ENCODE measurements at regions of chr2 and their contacts with region 1.

Region 1: GRCh38 chr2:102703748-102704147 is 58.1 kb upstream of the TMEM182 start:
- ATAC-seq: peak in 4 of 8 experiments; percentile 58 to 95 (median 88)
- H3K4me3 ChIP-seq: no peak overlapping the region
- H3K27ac ChIP-seq: no peak overlapping the region
- H3K4me1 ChIP-seq: no peaks in the 10 kb centered on the region

Region 2: DNA sequence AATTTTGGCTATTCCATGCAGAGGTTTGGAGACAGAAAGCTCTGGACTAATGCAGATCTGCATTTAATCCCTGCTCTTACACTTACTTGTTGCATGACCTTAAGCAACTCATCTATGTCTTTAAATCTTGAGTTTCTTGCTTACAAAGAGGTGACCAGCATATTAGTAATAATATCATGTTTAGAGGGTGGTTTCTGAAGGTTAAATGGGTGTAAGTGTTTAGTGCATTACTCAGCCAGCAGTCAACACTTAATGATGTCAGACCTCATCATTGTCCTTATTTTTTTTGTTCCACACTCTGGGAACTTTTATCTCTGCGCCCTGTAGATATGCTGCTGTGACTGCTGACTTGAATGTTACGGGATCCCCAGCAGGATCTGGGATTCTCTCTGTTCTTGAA is 390.7 kb before region 1 on chr2:
- in situ Hi-C with region 1: no loop called
- ATAC-seq: peak in 2 of 8 experiments; percentile 16 to 55
- H3K4me3 ChIP-seq: no peak overlapping the region
- H3K27ac ChIP-seq: no peak overlapping the region
- H3K4me1 ChIP-seq: no peaks in the 10 kb centered on the region

Region 3: DNA sequence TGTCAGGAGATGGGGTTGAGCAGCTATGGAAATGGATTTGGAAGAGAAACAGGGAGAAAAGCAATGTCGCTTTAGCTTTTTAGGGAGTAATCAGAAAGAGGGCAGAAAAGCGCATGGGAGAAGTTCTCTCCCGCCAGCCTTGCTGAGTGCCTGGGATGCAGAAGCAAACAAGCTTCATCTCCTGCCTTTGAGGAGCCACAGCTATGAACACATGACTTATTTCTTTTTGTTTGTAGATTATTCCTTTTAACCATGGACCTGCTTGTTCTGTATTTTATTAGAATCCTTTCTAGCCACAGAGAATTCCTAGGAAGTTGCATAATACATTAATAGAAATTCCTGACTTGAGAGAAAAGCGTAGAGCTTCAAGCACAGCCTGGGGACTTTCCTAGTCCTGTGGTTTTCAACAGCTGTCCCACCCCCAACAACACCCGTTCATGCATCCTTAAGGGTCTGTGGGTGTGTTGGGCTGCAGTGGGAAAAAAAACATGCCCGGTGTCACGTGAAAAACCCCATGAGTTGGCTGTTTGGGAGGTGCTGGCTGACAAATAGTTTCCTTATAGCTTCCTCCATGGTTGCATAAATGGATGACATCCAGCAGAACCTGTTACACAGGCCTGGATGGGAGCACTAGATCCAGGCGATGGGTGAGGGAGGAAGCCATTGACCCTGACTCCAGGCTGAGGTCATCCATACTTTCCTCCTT is 215.8 kb before region 1 on chr2:
- in situ Hi-C with region 1: loop called in 1 of 9 experiments (anchors 25 kb)
- ATAC-seq: peak in 3 of 8 experiments; percentile 73 to 89 (median 85)
- H3K4me3 ChIP-seq: no peak overlapping the region
- H3K27ac ChIP-seq: no peak overlapping the region
- H3K4me1 ChIP-seq: no peaks in the 10 kb centered on the region

Region 4: GRCh38 chr2:102615622-102616436 is 87.9 kb before region 1 on chr2:
- in situ Hi-C with region 1: loop called in 1 of 9 experiments (anchors 25 kb)
- ATAC-seq: peak in 6 of 8 experiments; percentile 26 to 80 (median 55)
- H3K4me3 ChIP-seq: no peak overlapping the region
- H3K27ac ChIP-seq: no peak overlapping the region
- H3K4me1 ChIP-seq: peaks cover 4 to 10% of the 10 kb centered on the region in 2 donors

Region 5: DNA sequence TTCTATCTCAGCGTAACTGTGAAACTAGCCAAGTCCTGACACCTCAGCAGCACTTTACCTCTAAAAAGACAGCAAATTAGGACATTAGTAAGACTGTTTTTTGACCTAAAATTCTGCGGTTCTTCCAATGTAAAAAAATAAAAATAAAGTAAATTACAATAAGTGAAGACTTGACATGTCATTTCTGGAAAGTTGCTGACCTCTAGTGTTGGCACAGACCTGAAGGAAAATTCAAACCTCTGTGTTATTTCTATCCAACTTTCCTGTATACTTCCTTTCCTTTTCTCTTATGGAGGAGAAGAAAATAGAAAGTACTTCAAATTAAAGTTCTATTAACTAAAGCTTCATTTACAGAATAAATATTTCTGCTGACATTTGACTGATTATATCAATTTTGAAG is 168.6 kb after region 1 on chr2:
- in situ Hi-C with region 1: no loop called
- ATAC-seq: no peak
- H3K4me3 ChIP-seq: no peak overlapping the region
- H3K27ac ChIP-seq: no peak overlapping the region
- H3K4me1 ChIP-seq: no peaks in the 10 kb centered on the region

Measured in motor neuron (in vitro differentiated cells).